Activated T-helper 2 cell treated with anti-CD3 and anti-CD28 coated beads, Interferon-gamma antibody, Interleukin-2, Interleukin-4, amounts not matched to agents 10 μg/mL and 5 μg/mL and 100 μg/mL, durations not matched to agents 14 hours and 24 hours and 36 hours (primary cell): ENCODE measurements at regions of chr6 and their contacts with region 1.

Region 1: GRCh38 chr6:57147955-57148858 is 23.9 kb upstream of the BAG2 start:
- DNase-seq: peak; percentile 25
- H3K4me3 Mint-ChIP-seq: peak overlapping the region; percentile 65
- H3K27ac Mint-ChIP-seq: peak overlapping the region; percentile 93
- H3K4me1 Mint-ChIP-seq: peaks cover 37% of the 10 kb centered on the region
- H3K27me3 Mint-ChIP-seq: no peaks in the 10 kb centered on the region

Region 2: DNA sequence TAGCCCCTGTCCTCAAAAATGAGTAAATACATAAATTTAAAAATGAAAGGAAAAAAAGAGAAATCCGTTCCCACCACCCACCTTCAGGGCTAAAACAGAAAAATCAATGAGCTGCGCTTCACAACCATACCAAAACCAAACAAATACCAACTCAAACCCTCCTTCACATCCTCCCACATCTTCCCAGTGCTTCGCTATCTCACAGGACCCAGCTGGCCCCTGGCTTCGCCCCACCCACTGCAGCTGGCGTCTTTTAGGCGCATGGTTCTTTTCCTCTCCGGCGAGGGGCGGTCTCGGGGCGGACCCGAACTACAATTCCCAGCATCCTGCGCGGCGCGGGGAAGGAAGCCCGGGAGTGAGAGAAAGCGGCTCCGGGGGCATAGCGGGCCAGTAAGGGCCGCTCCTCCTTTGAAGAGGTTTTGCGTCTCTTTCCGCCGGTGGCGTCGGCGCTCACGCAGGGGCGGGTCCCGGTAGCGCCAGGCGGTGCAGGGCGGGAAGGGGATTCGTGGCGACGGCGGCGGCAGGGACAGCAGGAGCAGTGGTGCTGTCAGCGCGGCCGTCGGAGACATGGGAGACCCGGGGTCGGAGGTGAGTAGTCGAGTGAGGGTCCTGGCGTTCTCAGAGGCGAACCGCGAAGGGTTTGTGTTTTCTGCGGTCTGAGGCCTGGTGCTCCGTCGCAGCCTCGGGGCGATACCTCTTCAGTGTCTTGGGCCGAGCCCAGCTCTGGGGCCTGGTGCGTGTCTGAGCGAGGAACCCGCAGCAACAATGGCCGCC is 58.3 kb before region 1 on chr6 and contains the start of gene ZNF451:
- intact Hi-C with region 1: loop called (anchors 1 kb)
- DNase-seq: peak; percentile 95
- H3K4me3 Mint-ChIP-seq: peak within 1 kb of the TSS; percentile 73
- H3K27ac Mint-ChIP-seq: peak within 1 kb of the TSS; percentile 81
- H3K4me1 Mint-ChIP-seq: peaks cover 36% of the 10 kb centered on the region
- H3K27me3 Mint-ChIP-seq: no peaks in the 10 kb centered on the region
- total RNA-seq, gene ZNF451: 57.7 and 60.3 TPM in 2 replicates

Region 3: GRCh38 chr6:57158658-57159057 is 10.5 kb after region 1 on chr6:
- intact Hi-C with region 1: loop called (anchors 1 kb)
- DNase-seq: no peak
- H3K4me3 Mint-ChIP-seq: no peak overlapping the region
- H3K27ac Mint-ChIP-seq: peak overlapping the region; percentile 34
- H3K4me1 Mint-ChIP-seq: peaks cover 14% of the 10 kb centered on the region
- H3K27me3 Mint-ChIP-seq: no peaks in the 10 kb centered on the region

Region 4: DNA sequence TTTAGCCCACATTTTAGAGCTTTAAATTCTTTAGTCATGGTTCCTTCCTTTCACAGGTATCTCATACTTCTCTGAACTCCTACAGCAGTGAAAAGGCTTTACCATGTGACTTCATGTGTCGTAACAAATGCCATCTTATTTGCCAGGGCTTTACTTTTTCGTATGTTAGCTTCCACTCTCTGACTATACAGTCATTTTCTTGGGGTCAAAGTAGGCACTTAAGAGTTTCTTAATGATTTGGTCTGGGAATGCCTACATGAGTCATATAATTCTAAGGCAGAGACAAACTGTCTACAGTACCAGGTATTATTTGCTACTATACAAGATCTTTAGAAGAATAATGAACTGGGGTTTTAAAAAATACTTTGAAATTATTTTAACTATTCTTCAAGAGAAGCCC is 58.9 kb after region 1 on chr6:
- intact Hi-C with region 1: loop called (anchors 1 kb)
- DNase-seq: no peak
- H3K4me3 Mint-ChIP-seq: no peak overlapping the region
- H3K27ac Mint-ChIP-seq: no peak overlapping the region
- H3K4me1 Mint-ChIP-seq: peaks cover 27% of the 10 kb centered on the region
- H3K27me3 Mint-ChIP-seq: no peaks in the 10 kb centered on the region